Endothelial cell of umbilical vein (primary cell): ENCODE measurements at regions of chr10 and their contacts with region 1.

Region 1: GRCh38 chr10:63066606-63067005 is 66.5 kb upstream of the NRBF2 start:
- DNase-seq: no peak
- H3K4me3 ChIP-seq: no peak overlapping the region
- H3K27ac ChIP-seq: no peak overlapping the region
- H3K4me1 ChIP-seq: no peaks in the 10 kb centered on the region
- H3K27me3 ChIP-seq: no peaks in the 10 kb centered on the region
- CTCF ChIP-seq: no peak
- POLR2A ChIP-seq: no peak

Region 2: DNA sequence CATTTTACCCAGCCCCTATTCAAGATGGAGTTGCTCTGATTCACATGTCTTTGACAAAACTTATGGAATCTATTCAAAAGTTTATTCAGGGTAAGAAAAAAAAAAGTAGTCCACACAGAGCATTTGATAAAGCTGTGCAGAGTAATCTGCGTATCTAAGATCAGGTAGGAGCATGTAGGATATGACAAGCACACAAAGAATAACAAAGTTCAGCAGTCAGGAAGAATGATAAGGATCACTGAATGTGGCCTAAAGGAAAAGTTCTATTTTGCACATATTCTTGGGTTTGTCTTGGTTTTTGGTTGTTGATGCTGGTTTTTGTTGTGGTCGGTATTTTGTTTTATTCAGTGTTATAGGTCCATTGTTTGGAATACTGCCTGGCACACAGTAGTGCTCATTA is 42.5 kb before region 1 on chr10:
- CTCF ChIA-PET with region 1: no interaction called
- POLR2A ChIA-PET with region 1: no interaction called
- dilution Hi-C with region 1: no loop called
- intact Hi-C with region 1: loop called (anchors 1 kb)
- DNase-seq: no peak
- H3K4me3 ChIP-seq: no peak overlapping the region
- H3K27ac ChIP-seq: no peak overlapping the region
- H3K4me1 ChIP-seq: no peaks in the 10 kb centered on the region
- H3K27me3 ChIP-seq: no peaks in the 10 kb centered on the region
- CTCF ChIP-seq: no peak
- POLR2A ChIP-seq: no peak